ENCODE measurements at regions of chr4 and their contacts with region 1.

Region 1: GRCh38 chr4:153153339-153153871 is 50.8 kb upstream of the TRIM2 start:
- ATAC-seq: peak; percentile 69 to 85 (median 82)
- H3K4me3 ChIP-seq: peak overlapping the region; percentile 51 to 81 (median 69)
- H3K27ac ChIP-seq: peak overlapping the region; percentile 92 to 95
- H3K4me1 ChIP-seq: peaks cover 29 to 32% of the 10 kb centered on the region in 2 donors

Region 2: DNA sequence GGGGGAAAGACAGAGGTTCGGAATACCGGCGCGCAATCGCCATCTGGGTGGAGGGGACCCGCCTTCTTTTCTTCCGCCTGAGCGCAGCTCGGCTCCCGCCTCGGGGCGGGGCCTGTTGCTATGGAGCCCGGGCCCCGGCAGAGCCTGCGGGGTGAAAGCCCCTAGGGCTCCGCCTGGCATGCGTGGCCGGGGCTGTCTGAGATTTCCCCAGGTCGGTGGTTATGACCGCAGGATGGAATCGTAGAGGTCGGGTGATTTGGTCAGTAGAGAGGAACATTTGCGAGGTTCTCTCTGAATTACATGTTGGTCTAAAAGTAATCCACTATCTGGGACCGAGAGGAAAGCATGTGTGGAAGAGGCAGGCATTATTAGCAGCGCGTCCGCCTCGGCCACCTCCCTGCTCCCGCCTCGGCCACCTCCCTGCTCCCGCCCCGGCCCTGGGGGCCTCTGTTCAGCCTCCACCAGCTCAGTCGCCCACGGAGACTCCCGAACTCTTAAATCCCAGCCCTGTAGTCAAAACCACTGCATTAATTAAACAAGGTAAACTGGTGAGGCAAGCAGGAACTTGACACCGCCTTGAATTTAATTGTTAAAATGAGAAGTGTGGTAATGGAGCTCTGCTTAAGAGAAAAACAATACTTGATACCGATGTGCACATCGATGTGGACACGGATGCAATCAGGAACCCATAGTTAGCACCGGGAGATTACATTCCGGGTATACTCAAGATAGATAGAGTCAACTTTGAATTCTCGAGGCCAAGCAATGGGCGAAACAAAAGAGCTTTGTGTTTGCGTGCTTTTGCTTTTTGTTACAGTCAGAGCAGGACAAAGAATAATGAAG is 96.0 kb after region 1 on chr4:
- in situ Hi-C with region 1: loop called in 1 of 9 experiments (anchors 25 kb)
- ATAC-seq: peak; percentile 92 to 97 (median 96)
- H3K4me3 ChIP-seq: peak overlapping the region; percentile 26 to 40 (median 34)
- H3K27ac ChIP-seq: peak overlapping the region; percentile 86 to 93
- H3K4me1 ChIP-seq: peaks cover 23 to 28% of the 10 kb centered on the region in 2 donors

Measured in motor neuron (in vitro differentiated cells).